ENCODE measurements at regions of chr5 and their contacts with region 1.

Region 1: DNA sequence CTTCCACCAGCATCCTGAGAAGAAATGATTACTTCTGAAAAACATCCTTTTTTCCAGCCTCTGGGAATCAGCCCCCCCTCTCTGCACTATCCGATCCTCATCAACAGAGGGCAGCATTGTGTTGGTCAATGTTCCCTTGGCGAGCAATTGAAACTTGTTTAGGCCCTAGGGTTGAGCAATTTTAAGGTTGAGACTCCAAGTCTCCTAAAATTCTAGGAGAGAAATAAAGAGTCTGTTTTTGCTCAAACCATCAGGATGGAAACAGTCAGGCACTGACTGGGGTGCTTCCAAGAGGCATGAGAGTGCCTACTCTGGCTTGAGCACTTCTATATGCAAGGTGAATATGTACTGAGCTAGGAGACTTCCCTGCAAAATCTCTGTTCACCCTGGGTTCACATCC is 12.4 kb upstream of the CYFIP2 start:
- DNase-seq: no peak
- ATAC-seq: peak; percentile 44
- H3K4me3 ChIP-seq: peak overlapping the region; percentile 31
- H3K4me3 Mint-ChIP-seq: peak overlapping the region; percentile 62 to 79 (median 72)
- H3K27ac ChIP-seq: peak overlapping the region; percentile 66
- H3K27ac Mint-ChIP-seq: peak overlapping the region; percentile 86 to 98 (median 96)
- H3K4me1 ChIP-seq: peaks cover 93 to 97% of the 10 kb centered on the region in 2 donors
- H3K4me1 Mint-ChIP-seq: peaks cover 64 to 99% (median 94%) of the 10 kb centered on the region in 7 donors
- H3K27me3 ChIP-seq: no peaks in the 10 kb centered on the region
- H3K27me3 Mint-ChIP-seq: no peaks in the 10 kb centered on the region

Region 2: GRCh38 chr5:157180374-157181264 is 72.9 kb before region 1 on chr5 and contains the start of gene ITK:
- CTCF ChIA-PET with region 1: interaction called, 6 read pairs
- POLR2A ChIA-PET with region 1: interaction called, 7 read pairs
- intact Hi-C with region 1: loop called (anchors 1 to 2 kb)
- DNase-seq: peak in 7 of 9 donors; percentile 66 to 84 (median 77)
- ATAC-seq: peak; percentile 88
- H3K4me3 ChIP-seq: peak within 1 kb of the TSS; percentile 62
- H3K4me3 Mint-ChIP-seq: peak within 1 kb of the TSS; percentile 89 to 100 (median 97)
- H3K27ac ChIP-seq: peak within 1 kb of the TSS; percentile 81
- H3K27ac Mint-ChIP-seq: peak within 1 kb of the TSS; percentile 91 to 99 (median 96)
- H3K4me1 ChIP-seq: peaks cover 33 to 42% of the 10 kb centered on the region in 2 donors
- H3K4me1 Mint-ChIP-seq: peaks cover 27 to 61% (median 50%) of the 10 kb centered on the region in 7 donors
- H3K27me3 ChIP-seq: no peaks in the 10 kb centered on the region
- H3K27me3 Mint-ChIP-seq: no peaks in the 10 kb centered on the region
- total RNA-seq, gene ITK: 278 to 481 (median 324) TPM

Region 3: DNA sequence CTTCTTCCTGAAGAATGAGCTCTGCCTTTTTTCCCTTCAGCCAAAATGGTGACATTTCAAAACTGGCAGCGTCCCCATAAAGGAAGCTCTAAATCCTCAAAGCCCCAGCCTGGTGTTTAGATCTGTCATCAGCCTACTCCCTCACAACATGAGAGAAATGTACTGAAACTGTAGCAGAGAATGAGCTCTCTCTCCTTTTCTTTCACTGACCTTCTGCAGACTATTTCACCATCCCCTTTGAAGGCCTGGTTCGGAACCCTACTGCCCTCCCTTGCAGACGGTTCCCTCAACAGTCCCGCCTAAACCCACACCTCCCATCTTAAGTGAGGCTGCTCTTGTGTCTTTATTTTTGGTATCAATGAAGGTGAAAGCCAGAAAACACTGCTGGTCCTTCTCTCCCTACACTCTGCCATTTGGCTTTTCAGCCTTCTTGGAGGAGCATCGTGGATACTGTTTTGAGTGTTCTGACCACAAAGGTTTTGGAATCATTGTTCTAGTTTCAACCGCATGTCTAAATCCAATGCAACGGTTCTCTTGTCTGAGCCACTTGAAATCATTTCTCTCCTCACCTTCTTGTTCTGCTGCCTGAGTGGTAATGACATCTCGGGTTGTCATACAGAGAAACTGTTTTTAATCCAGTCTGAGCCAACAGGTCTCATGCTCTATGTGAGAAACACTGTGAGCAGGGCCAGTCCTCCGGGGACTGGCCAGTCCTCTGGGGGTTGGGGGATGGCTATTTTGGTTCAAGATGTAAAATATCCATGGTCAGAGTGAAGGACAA is 33.9 kb before region 1 on chr5:
- CTCF ChIA-PET with region 1: interaction called, 4 read pairs
- POLR2A ChIA-PET with region 1: interaction called, 30 read pairs
- intact Hi-C with region 1: loop called (anchors 1 kb)
- DNase-seq: peak in 1 of 9 donors; percentile 54
- ATAC-seq: no peak
- H3K4me3 ChIP-seq: no peak overlapping the region
- H3K4me3 Mint-ChIP-seq: peak overlapping the region in 9 of 10 donors; percentile 39 to 89 (median 65)
- H3K27ac ChIP-seq: peak overlapping the region; percentile 63
- H3K27ac Mint-ChIP-seq: peak overlapping the region; percentile 89 to 98 (median 94)
- H3K4me1 ChIP-seq: peaks cover 82 to 87% of the 10 kb centered on the region in 2 donors
- H3K4me1 Mint-ChIP-seq: peaks cover 54 to 94% (median 85%) of the 10 kb centered on the region in 7 donors
- H3K27me3 ChIP-seq: no peaks in the 10 kb centered on the region
- H3K27me3 Mint-ChIP-seq: no peaks in the 10 kb centered on the region

Region 4: DNA sequence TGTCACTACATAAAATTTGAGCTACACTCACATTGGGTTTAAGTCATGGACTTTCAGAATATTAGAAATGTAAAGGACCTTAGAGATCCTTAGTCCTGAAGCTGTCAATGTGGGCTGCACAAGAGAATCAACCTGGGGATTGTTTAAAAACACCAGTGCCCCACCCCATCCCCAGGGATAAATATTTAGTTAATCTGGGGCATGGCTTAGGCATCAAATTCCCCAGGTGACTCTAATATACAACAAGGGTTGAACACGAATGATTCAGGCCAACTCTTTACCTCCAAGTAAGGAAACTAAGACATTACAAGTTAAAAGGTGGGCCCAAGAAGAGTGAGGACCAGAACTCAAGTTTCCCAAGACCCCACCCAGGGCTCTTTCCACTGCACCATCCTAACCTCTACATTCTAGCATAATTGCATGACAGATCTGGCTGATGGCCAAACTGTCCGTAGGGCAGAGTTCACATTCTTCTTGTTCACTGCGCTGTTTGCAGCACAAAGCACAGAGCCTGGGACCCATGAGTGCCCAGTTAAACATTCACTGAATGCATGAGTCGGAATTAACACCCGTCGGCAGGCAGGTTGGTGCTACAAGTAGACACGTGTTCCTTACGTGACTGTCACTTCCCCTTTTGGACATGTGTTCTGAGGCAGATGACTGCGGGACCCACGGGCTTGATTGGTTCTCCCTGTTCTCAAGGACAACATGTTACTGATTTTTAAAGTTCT is 37.6 kb after region 1 on chr5:
- CTCF ChIA-PET with region 1: interaction called, 4 read pairs
- POLR2A ChIA-PET with region 1: interaction called, 10 read pairs
- intact Hi-C with region 1: loop called in 1 of 2 experiments (anchors 1 kb)
- DNase-seq: no peak
- ATAC-seq: peak; percentile 68
- H3K4me3 ChIP-seq: no peak overlapping the region
- H3K4me3 Mint-ChIP-seq: peak overlapping the region in 2 of 10 donors; percentile 13 to 67
- H3K27ac ChIP-seq: peak overlapping the region; percentile 42
- H3K27ac Mint-ChIP-seq: peak overlapping the region; percentile 63 to 95 (median 89)
- H3K4me1 ChIP-seq: peaks cover 0 to 54% of the 10 kb centered on the region in 2 donors
- H3K4me1 Mint-ChIP-seq: peaks cover 38 to 93% (median 66%) of the 10 kb centered on the region in 7 donors
- H3K27me3 ChIP-seq: no peaks in the 10 kb centered on the region
- H3K27me3 Mint-ChIP-seq: no peaks in the 10 kb centered on the region

Region 5: GRCh38 chr5:157312492-157312891 is 58.9 kb after region 1 on chr5:
- CTCF ChIA-PET with region 1: interaction called, 14 read pairs
- POLR2A ChIA-PET with region 1: interaction called, 5 read pairs
- intact Hi-C with region 1: loop called (anchors 1 kb)
- DNase-seq: peak in 8 of 9 donors; percentile 51 to 71 (median 65)
- ATAC-seq: peak; percentile 96
- H3K4me3 ChIP-seq: no peak overlapping the region
- H3K4me3 Mint-ChIP-seq: peak overlapping the region in 2 of 10 donors; percentile 35
- H3K27ac ChIP-seq: peak overlapping the region; percentile 39
- H3K27ac Mint-ChIP-seq: peak overlapping the region; percentile 50 to 94 (median 86)
- H3K4me1 ChIP-seq: peaks cover 22 to 36% of the 10 kb centered on the region in 2 donors
- H3K4me1 Mint-ChIP-seq: peaks cover 18 to 59% (median 42%) of the 10 kb centered on the region in 7 donors
- H3K27me3 ChIP-seq: no peaks in the 10 kb centered on the region
- H3K27me3 Mint-ChIP-seq: no peaks in the 10 kb centered on the region

Region 6: GRCh38 chr5:158435161-158435616 is 1181.6 kb after region 1 on chr5:
- CTCF ChIA-PET with region 1: no interaction called
- POLR2A ChIA-PET with region 1: no interaction called
- intact Hi-C with region 1: no loop called
- DNase-seq: peak in 8 of 9 donors; percentile 19 to 70 (median 56)
- ATAC-seq: peak; percentile 88
- H3K4me3 ChIP-seq: peak overlapping the region; percentile 2
- H3K4me3 Mint-ChIP-seq: peak overlapping the region; percentile 61 to 85 (median 80)
- H3K27ac ChIP-seq: peak overlapping the region; percentile 28
- H3K27ac Mint-ChIP-seq: peak overlapping the region; percentile 49 to 89 (median 74)
- H3K4me1 ChIP-seq: peaks cover 9 to 51% of the 10 kb centered on the region in 2 donors
- H3K4me1 Mint-ChIP-seq: peaks cover 21 to 73% (median 64%) of the 10 kb centered on the region in 7 donors
- H3K27me3 ChIP-seq: no peaks in the 10 kb centered on the region
- H3K27me3 Mint-ChIP-seq: no peaks in the 10 kb centered on the region

Region 7: GRCh38 chr5:158739951-158740757 is 1486.6 kb after region 1 on chr5:
- CTCF ChIA-PET with region 1: no interaction called
- POLR2A ChIA-PET with region 1: no interaction called
- intact Hi-C with region 1: no loop called
- DNase-seq: no peak
- ATAC-seq: no peak
- H3K4me3 ChIP-seq: no peak overlapping the region
- H3K4me3 Mint-ChIP-seq: no peak overlapping the region
- H3K27ac ChIP-seq: no peak overlapping the region
- H3K27ac Mint-ChIP-seq: no peak overlapping the region
- H3K4me1 ChIP-seq: no peaks in the 10 kb centered on the region
- H3K4me1 Mint-ChIP-seq: no peaks in the 10 kb centered on the region
- H3K27me3 ChIP-seq: peaks cover 0 to 3% of the 10 kb centered on the region in 2 donors
- H3K27me3 Mint-ChIP-seq: peaks cover 0 to 7% (median 0%) of the 10 kb centered on the region in 5 donors

Measured in naive thymus-derived CD4-positive, alpha-beta T cell (primary cell).